WTC11 (cell line): ENCODE measurements at regions of chr11 and their contacts with region 1.

Region 1: DNA sequence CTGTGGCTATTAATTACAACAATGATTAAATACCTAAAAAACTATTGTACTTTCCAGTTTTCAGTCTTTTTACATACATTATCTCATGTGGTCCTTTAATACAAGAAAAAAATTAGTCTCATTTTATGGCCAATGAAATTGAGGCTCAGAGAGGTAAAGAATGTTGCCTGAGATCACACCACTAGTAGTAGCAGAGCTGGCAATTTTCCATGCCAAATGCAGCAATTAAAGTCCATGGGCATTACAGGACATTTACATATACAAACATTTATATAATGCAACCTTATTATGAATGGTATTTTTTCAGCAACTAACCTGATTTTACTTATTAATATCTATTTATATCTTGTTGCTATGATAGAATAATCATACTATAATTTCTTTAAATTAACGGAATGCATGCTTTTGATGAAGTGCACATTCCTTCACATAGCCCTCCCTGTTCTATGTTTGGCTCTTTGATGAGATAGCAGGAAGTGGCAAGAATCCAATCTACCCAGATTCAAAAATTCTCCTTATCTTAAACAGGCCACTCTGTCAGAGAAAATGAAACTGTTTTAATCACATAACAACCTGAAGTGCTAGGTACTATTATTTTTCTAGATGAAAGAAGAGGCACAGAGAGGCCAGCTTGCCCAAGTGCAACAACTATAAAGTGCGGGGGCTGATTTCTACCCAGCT is 120.9 kb upstream of the LDLRAD3 start:
- DNase-seq: no peak
- ATAC-seq: no peak
- H3K4me3 Mint-ChIP-seq: no peak overlapping the region
- H3K27ac Mint-ChIP-seq: no peak overlapping the region
- H3K4me1 Mint-ChIP-seq: peaks cover 15% of the 10 kb centered on the region
- H3K27me3 Mint-ChIP-seq: peaks cover 8% of the 10 kb centered on the region; the same call in 1 of the 2 replicates
- CTCF ChIP-seq: no peak

Region 2: DNA sequence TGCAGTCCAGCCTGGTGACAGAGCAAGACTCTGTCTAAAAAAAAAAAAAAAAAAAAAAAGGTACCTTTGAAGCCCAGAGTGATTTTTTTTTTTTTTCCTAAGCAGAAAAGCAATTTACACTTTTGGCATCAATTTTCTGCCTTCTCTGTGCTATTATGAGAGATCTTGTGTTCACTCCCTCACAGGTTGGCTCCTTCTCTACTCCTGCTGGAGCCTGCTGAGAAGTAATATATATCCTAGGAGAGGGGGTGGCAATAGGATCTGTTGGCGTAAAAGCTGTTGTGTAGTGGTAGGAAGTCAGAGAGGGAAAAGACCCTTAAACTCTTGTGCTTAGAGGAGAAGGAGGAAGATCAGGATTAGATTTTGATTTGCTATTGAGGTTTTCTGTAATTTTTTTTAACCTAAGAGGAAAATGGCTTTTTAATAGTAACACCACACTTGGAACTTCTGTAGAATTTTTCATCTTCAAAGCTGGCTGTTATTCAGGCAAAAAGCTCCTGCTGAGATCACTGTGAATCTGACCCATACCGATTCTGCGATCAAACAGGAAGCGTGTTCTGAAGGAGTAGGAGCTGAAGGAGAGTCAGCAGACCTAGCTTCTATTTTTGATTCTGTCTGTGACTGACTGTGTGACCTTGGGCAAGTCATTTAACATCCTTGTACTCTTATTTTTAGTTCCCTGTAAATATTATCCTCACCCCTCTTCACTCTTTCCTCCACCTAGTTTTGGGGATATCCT is 82.7 kb before region 1 on chr11:
- CTCF ChIA-PET with region 1: interaction called, 17 read pairs
- POLR2A ChIA-PET with region 1: no interaction called
- DNase-seq: no peak
- ATAC-seq: no peak
- H3K4me3 Mint-ChIP-seq: no peak overlapping the region
- H3K27ac Mint-ChIP-seq: no peak overlapping the region
- H3K4me1 Mint-ChIP-seq: peaks cover 8% of the 10 kb centered on the region
- H3K27me3 Mint-ChIP-seq: no peaks in the 10 kb centered on the region
- CTCF ChIP-seq: no peak

Region 3: DNA sequence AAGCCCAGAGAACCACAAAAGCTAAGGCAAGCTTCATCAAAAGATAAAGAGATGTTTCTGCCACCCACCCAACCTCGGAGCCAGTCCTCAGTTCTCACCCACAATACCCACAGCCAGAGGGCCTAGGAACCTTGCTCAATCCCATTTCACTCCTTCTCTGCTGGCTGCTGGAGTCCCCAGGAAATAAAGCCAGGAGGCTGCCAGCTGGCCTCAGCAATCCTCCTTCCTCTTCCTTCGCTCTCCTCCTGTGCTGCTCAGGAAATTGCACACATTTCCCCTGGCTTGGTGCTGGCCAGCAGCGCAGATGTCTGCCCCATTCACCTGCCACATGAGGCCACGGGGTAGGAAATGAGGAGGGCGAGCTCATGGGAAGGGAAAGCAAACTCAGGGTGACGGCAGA is 29.1 kb after region 1 on chr11:
- CTCF ChIA-PET with region 1: interaction called, 25 read pairs
- POLR2A ChIA-PET with region 1: no interaction called
- DNase-seq: no peak
- ATAC-seq: no peak
- H3K4me3 Mint-ChIP-seq: no peak overlapping the region
- H3K27ac Mint-ChIP-seq: no peak overlapping the region
- H3K4me1 Mint-ChIP-seq: peaks cover 12% of the 10 kb centered on the region; the same call in 1 of the 2 replicates
- H3K27me3 Mint-ChIP-seq: no peaks in the 10 kb centered on the region; the same call in 1 of the 2 replicates
- CTCF ChIP-seq: no peak

Region 4: DNA sequence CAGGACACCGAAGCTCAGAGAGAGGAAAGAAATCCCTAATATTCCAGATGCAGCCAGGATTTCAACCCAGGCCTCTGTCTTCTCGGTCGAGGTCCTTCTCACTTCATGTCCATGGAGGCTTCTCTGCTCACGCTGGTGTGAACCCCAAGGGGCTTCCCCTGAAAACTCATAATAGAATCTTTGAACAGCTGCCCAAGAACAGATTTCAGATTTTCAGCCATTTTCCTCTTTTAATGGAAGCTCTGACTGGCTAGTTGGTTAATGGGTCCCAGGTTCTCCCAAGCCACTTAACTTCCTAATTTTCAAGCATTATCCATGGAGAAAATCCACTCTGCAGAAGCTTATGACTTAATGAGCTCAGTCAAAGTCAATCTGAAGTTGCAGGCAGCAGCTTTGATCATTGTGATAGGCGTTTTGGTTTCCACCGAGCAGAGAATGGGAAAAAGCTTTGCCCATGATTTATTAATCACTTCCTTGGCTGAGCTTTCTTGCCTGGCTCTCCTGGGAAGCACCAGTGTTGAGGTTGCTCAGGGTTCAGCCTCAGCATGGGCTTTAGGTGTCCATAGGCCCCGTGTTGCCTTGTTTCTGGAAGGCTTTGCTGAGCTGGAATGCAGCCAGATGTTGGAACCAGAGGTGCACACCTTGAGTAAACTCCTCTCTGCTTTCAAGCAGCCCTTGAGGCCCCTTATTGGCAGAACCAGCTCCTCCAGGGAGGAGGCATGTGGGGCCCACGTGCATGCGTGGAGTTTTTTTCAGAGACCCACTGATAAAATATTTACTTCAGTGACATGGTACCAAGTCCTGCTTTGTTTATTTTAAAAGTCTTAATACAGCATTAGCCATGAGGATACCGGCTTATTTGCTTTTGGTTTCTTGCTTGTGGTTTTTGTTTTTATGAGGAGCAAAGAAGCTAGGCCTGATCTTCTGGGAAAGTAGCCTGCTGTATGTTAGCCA is 146.4 kb after region 1 on chr11:
- CTCF ChIA-PET with region 1: interaction called, 11 read pairs
- POLR2A ChIA-PET with region 1: no interaction called
- DNase-seq: no peak
- ATAC-seq: no peak
- H3K4me3 Mint-ChIP-seq: no peak overlapping the region
- H3K27ac Mint-ChIP-seq: no peak overlapping the region
- H3K4me1 Mint-ChIP-seq: peaks cover 37% of the 10 kb centered on the region
- H3K27me3 Mint-ChIP-seq: 0 out of 2 replicates have a peak, but pooled peaks cover 2% of the 10 kb centered on the region
- CTCF ChIP-seq: no peak

Region 5: GRCh38 chr11:36062796-36063365 is 239.9 kb after region 1 on chr11:
- CTCF ChIA-PET with region 1: interaction called, 217 read pairs
- POLR2A ChIA-PET with region 1: no interaction called
- DNase-seq: no peak
- ATAC-seq: no peak
- H3K4me3 Mint-ChIP-seq: no peak overlapping the region
- H3K27ac Mint-ChIP-seq: peak overlapping the region; percentile 47; the same call in 1 of the 2 replicates
- H3K4me1 Mint-ChIP-seq: peaks cover 15% of the 10 kb centered on the region
- H3K27me3 Mint-ChIP-seq: no peaks in the 10 kb centered on the region
- CTCF ChIP-seq: no peak

Region 6: DNA sequence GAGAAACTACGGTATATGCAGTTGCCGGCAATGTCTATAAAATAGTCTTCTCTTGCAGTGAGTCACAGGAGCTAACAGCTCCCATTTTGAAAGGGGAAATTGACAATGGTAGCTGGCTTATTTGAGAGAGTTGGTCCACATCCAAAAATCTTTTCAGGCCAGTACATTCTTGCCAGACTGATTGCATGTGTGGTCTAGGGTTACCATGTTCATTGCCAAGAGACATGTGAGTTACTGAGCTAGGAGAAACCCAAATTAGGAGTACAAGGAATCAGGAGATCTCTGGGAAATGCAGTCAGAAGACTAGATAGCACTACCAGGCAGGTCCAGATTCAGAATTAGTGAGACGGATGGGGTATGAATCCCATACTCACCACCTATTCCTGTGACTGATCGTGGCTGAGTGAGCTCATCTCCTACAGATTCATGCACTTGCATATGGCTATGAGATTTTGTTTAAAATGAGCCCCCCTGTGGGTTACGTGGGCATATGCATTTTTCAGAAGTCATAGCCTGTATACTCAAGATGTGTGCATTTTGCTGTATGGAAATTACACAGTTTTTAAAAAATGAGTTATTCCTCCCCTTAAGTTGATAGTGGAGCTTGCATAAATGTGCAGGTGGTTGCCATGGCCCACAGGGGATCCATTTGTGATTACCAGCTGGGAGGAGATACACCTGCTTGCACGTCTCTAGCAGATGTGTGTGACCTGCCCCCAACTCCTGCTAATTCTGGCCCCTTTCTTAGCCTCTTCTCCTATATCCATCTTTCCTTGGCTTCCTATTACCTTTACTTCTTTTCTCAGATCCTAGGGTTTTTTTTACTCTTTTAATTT is 363.6 kb after region 1 on chr11:
- CTCF ChIA-PET with region 1: interaction called, 11 read pairs
- POLR2A ChIA-PET with region 1: no interaction called
- DNase-seq: no peak
- ATAC-seq: no peak
- H3K4me3 Mint-ChIP-seq: no peak overlapping the region
- H3K27ac Mint-ChIP-seq: no peak overlapping the region
- H3K4me1 Mint-ChIP-seq: peaks cover 2% of the 10 kb centered on the region; the same call in 1 of the 2 replicates
- H3K27me3 Mint-ChIP-seq: no peaks in the 10 kb centered on the region
- CTCF ChIP-seq: no peak